Right cardiac atrium (tissue), 5 donors: ENCODE measurements at regions of chr9 and their contacts with region 1.

Region 1: GRCh38 chr9:19161257-19162025 is 34.1 kb upstream of the PLIN2 start:
- DNase-seq: no peak
- ATAC-seq: peak; percentile 79 to 93
- H3K4me3 ChIP-seq: no peak overlapping the region
- H3K27ac ChIP-seq: peak overlapping the region; percentile 52
- H3K4me1 ChIP-seq: peaks cover 3% of the 10 kb centered on the region
- H3K27me3 ChIP-seq: no peaks in the 10 kb centered on the region

Region 2: DNA sequence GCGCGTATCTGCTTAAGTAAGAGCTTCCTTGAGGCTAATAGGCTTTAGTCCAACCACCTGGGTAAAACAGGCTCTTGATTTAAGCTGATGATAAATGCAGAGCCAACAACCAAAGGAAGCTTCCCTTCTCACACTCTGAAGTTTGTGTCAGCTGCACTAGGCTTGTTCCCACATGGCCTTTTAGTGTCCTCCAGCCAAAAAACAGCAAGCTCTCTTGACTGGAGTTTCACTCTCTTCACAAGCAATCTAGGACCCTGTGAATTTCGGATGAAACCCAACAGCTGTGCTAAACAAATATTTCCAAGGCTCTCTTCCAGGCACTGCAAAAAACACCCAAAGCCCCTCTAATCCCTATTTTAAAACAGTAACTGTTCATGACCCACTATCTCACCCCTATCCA is 192.3 kb before region 1 on chr9:
- intact Hi-C with region 1: no loop called
- DNase-seq: no peak
- ATAC-seq: peak in 1 of 2 donors; percentile 85
- H3K4me3 ChIP-seq: no peak overlapping the region
- H3K27ac ChIP-seq: no peak overlapping the region
- H3K4me1 ChIP-seq: peaks cover 4% of the 10 kb centered on the region
- H3K27me3 ChIP-seq: no peaks in the 10 kb centered on the region

Region 3: GRCh38 chr9:19127881-19128500 is 33.5 kb before region 1 on chr9:
- intact Hi-C with region 1: loop called in 1 of 4 experiments (anchors 5 kb)
- DNase-seq: peak; percentile 57 to 80 (median 73)
- ATAC-seq: peak; percentile 15 to 27
- H3K4me3 ChIP-seq: peak overlapping the region; percentile 81
- H3K27ac ChIP-seq: peak overlapping the region; percentile 92
- H3K4me1 ChIP-seq: peaks cover 6% of the 10 kb centered on the region
- H3K27me3 ChIP-seq: no peaks in the 10 kb centered on the region